ENCODE measurements at regions of chr1 and their contacts with region 1.

Region 1: GRCh38 chr1:70745199-70745598 is 302.4 kb downstream of the PTGER3 start:
- DNase-seq: no peak
- H3K4me3 ChIP-seq: no peak overlapping the region
- H3K27ac ChIP-seq: no peak overlapping the region
- H3K4me1 ChIP-seq: no peaks in the 10 kb centered on the region
- H3K27me3 ChIP-seq: no peaks in the 10 kb centered on the region
- CTCF ChIP-seq: no peak
- POLR2A ChIP-seq: no peak

Region 2: DNA sequence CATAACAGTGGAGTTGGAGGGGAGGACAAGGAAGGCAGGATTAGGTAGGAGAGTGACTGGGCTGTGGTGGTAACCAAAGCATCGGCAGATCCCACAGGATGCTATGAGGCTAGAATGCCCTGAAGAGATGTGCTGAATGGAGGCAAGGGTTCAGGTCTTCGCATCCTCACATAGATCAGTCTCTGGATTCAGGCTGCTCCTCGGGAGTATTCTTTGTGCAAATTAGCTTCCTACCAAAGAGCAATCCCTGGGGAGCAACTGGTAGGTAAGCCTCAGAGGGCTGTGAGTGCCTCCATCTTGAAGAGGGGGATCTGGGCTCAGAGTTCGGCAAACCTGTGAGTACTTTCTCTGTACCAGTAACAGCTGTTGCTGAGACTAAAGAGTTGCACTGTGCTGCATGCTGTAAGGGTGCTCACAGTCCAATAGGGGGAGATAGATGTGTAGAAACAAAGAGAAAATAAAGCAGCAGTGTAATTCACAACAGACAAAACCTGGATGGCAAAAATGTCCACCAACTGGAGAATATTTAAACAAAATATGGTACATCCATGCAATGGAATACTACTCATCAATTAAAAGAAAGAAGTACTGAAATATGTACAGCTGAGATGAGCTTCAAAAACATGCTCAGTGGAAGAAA is 1925.9 kb before region 1 on chr1:
- intact Hi-C with region 1: no loop called
- DNase-seq: no peak
- H3K4me3 ChIP-seq: no peak overlapping the region
- H3K27ac ChIP-seq: no peak overlapping the region
- H3K4me1 ChIP-seq: no peaks in the 10 kb centered on the region
- H3K27me3 ChIP-seq: no peaks in the 10 kb centered on the region
- CTCF ChIP-seq: peak in 1 of 3 donors; percentile 8
- POLR2A ChIP-seq: no peak

Region 3: GRCh38 chr1:70779571-70779970 is 34.4 kb after region 1 on chr1:
- intact Hi-C with region 1: loop called (anchors 1 kb)
- DNase-seq: no peak
- H3K4me3 ChIP-seq: no peak overlapping the region
- H3K27ac ChIP-seq: no peak overlapping the region
- H3K4me1 ChIP-seq: no peaks in the 10 kb centered on the region
- H3K27me3 ChIP-seq: no peaks in the 10 kb centered on the region
- CTCF ChIP-seq: no peak
- POLR2A ChIP-seq: no peak

Region 4: DNA sequence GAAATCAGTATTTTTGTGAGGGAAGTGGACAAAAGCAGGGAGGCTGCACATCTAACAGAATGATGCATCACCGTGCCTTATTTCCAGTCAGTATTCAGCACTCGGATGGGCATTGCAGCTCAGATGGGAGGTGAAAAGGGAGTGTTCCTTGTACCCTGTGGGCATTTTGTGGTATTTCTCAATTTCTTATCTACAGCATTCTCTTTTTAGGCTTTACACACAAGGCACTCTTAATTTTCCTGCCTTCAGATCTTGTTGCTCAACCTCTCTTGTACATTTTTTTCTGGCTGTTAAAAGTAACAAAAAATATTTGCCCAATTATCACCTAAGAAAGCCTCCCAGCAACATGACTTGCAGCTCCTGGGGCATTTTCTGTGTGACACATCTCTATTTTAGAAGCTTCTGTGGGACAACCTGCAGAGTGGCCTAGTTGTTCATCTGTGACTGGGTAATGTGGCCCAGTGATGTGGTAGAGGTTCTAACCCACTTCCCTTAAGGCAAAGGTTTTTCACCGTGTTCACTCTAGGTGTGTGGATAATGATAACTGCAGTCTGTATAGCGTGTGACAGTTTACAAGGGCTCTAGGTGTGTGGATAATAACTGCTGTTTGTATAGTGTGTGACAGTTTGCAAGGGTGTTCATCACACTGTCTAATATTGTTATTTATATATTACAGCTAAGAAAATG is 45.2 kb after region 1 on chr1:
- intact Hi-C with region 1: no loop called
- DNase-seq: no peak
- H3K4me3 ChIP-seq: no peak overlapping the region
- H3K27ac ChIP-seq: no peak overlapping the region
- H3K4me1 ChIP-seq: no peaks in the 10 kb centered on the region
- H3K27me3 ChIP-seq: no peaks in the 10 kb centered on the region
- CTCF ChIP-seq: no peak
- POLR2A ChIP-seq: no peak